Breast epithelium (tissue), 4 donors: ENCODE measurements at regions of chr18 and their contacts with region 1.

Region 1: GRCh38 chr18:4241090-4241617 is 214.0 kb downstream of the DLGAP1 start:
- DNase-seq: no peak
- H3K4me3 ChIP-seq: no peak overlapping the region
- H3K27ac ChIP-seq: no peak overlapping the region
- H3K4me1 ChIP-seq: no peaks in the 10 kb centered on the region
- H3K27me3 ChIP-seq: no peaks in the 10 kb centered on the region
- CTCF ChIP-seq: no peak
- POLR2A ChIP-seq: no peak

Region 2: DNA sequence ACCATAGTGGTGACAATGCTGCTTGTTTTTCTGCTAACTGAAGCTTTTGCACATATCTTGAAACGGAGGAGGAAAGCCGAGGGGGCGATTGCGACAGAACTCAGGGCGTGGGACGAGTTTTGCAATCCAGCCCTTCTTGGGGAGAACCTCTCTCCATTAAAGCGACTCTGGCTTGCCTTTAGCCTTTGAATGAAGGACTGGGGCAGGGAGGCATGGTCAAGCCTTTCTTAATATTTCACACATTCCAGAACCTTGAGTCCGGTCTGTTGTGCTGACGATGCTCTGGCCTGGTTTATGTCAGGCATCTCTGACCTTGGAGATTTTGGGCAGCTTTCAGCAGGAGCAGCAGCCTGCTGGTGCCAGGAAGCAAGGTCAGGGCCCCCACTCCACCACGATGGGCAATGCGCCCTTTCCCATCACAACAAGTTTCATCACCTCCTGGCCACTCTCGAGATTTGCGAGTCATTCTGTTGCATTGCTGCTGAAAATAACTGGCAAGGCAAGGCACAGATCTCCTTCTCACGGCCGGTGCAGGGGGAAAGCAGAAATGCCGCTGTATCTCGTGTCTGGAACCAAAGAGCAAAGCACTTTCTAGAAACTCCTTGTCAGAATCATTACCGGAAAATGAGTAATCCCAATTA is 1383.5 kb before region 1 on chr18:
- intact Hi-C with region 1: no loop called
- DNase-seq: peak in 1 of 2 donors; percentile 61
- H3K4me3 ChIP-seq: no peak overlapping the region
- H3K27ac ChIP-seq: peak overlapping the region; percentile 50 to 85
- H3K4me1 ChIP-seq: no peaks in the 10 kb centered on the region
- H3K27me3 ChIP-seq: no peaks in the 10 kb centered on the region
- CTCF ChIP-seq: no peak
- POLR2A ChIP-seq: no peak

Region 3: DNA sequence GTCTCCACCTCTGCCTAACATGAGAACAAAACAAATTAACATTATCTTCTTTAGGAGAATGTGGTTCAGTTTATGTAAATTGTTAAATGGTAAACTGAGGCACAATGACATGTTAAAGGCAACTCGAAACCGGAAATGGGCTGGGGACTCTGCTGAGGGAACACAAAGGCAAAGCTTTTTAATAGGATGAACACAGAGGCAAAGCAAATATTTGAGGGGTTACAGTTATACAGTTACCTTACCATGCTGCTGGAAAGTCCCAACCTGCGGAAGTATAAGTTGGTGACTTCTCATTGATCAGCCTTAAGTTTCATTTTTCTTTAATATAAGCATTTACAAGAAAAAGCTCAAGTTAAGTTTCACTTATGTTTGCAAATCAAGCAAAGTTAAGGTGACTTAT is 19.0 kb after region 1 on chr18:
- intact Hi-C with region 1: no loop called
- DNase-seq: no peak
- H3K4me3 ChIP-seq: no peak overlapping the region
- H3K27ac ChIP-seq: no peak overlapping the region
- H3K4me1 ChIP-seq: no peaks in the 10 kb centered on the region
- H3K27me3 ChIP-seq: no peaks in the 10 kb centered on the region
- CTCF ChIP-seq: no peak
- POLR2A ChIP-seq: no peak

Region 4: DNA sequence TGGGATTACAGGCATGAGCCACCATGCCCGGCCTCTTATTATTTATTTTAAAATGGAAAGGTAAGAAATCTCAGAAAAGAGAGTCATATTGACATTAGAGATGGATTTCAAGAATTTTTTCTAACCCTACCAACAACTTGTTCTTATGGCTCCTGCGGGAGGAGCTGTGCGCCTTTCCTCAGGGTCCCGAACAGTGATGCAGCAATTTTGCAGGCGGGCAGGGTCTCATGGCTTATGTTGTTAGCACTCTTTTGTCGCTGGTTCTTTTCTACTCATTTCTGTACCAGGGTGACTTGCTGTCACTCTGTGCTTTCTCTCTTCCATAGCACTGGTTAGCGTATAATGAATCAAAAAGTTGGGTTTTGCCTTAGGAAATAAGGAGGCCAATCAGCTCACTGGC is 362.8 kb after region 1 on chr18:
- intact Hi-C with region 1: loop called (anchors 5 kb)
- DNase-seq: no peak
- H3K4me3 ChIP-seq: no peak overlapping the region
- H3K27ac ChIP-seq: no peak overlapping the region
- H3K4me1 ChIP-seq: no peaks in the 10 kb centered on the region
- H3K27me3 ChIP-seq: no peaks in the 10 kb centered on the region
- CTCF ChIP-seq: no peak
- POLR2A ChIP-seq: no peak

Region 5: DNA sequence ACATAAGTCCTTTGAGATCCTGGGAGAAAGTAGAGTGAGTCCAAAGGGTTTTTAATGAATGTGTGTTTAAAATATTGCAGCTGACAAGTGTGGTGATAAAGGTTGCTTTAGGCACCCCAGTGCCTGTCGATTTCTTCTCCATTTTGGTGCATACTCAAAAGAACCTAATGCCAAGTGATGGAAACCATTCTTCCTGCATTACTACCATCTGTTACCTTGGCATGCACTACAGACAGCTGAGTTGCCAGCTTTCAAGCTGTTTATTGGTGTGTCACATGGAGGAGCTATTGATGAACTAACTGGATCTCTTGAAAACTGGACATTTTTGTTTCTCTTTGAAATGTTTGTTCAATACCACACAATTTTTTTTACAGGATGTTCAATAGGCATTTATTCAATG is 605.9 kb after region 1 on chr18:
- intact Hi-C with region 1: no loop called
- DNase-seq: no peak
- H3K4me3 ChIP-seq: no peak overlapping the region
- H3K27ac ChIP-seq: no peak overlapping the region
- H3K4me1 ChIP-seq: no peaks in the 10 kb centered on the region
- H3K27me3 ChIP-seq: no peaks in the 10 kb centered on the region
- CTCF ChIP-seq: no peak
- POLR2A ChIP-seq: no peak